ENCODE measurements at regions of chr9 and their contacts with region 1.

Region 1: GRCh38 chr9:75993434-75993833 is 103.0 kb downstream of the PCSK5 start:
- DNase-seq: no peak
- H3K4me3 Mint-ChIP-seq: no peak overlapping the region
- H3K27ac Mint-ChIP-seq: no peak overlapping the region
- H3K4me1 Mint-ChIP-seq: peaks cover 32% of the 10 kb centered on the region
- H3K27me3 Mint-ChIP-seq: no peaks in the 10 kb centered on the region

Region 2: GRCh38 chr9:75142202-75142601 is 851.2 kb before region 1 on chr9:
- CTCF ChIA-PET with region 1: no interaction called
- POLR2A ChIA-PET with region 1: no interaction called
- intact Hi-C with region 1: no loop called
- DNase-seq: no peak
- H3K4me3 Mint-ChIP-seq: no peak overlapping the region
- H3K27ac Mint-ChIP-seq: peak overlapping the region; percentile 67
- H3K4me1 Mint-ChIP-seq: peaks cover 61% of the 10 kb centered on the region
- H3K27me3 Mint-ChIP-seq: no peaks in the 10 kb centered on the region

Region 3: DNA sequence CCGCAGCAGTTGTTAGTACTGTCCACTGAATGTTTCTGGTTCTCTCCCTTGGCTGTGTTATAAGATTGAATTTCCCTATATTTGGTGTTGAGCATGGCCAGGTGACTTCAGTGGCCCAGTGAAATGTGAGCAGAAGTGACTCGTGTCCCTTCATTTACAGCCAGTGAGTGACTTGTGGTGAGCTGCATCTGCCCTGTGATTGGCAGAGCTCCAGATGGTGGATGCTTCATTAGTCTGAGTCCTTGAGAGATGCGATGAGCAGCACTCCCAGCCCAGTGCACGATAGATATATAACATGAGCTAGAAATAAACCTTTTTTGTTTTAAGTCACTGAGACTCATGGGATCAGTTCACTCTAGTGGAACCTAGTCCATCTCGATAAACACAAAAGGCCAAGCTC is 83.7 kb before region 1 on chr9:
- CTCF ChIA-PET with region 1: no interaction called
- POLR2A ChIA-PET with region 1: no interaction called
- intact Hi-C with region 1: loop called (anchors 5 kb)
- DNase-seq: peak; percentile 12
- H3K4me3 Mint-ChIP-seq: no peak overlapping the region
- H3K27ac Mint-ChIP-seq: no peak overlapping the region
- H3K4me1 Mint-ChIP-seq: peaks cover 16% of the 10 kb centered on the region
- H3K27me3 Mint-ChIP-seq: no peaks in the 10 kb centered on the region

Region 4: DNA sequence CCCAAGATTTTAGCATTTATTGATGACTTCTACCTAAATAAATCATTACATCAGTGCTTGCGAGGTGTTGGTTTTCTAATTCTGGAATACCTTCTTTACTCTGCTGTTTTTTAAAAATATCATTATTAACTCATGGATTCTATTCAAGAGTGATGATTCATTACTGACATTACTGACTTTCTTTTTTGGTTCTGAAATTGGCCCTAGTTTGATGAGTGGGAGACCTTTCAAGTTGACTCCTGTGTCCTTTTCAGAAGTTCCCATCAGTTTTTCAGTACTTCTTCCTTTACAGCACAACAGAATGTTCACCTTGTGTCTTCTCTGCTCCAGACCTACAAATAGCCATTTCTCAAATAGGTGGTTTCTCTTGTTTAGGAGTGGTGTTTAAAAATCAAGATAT is 11.1 kb after region 1 on chr9:
- CTCF ChIA-PET with region 1: no interaction called
- POLR2A ChIA-PET with region 1: no interaction called
- intact Hi-C with region 1: loop called (anchors 1 kb)
- DNase-seq: no peak
- H3K4me3 Mint-ChIP-seq: no peak overlapping the region
- H3K27ac Mint-ChIP-seq: no peak overlapping the region
- H3K4me1 Mint-ChIP-seq: peaks cover 27% of the 10 kb centered on the region
- H3K27me3 Mint-ChIP-seq: no peaks in the 10 kb centered on the region

Region 5: GRCh38 chr9:76018235-76018634 is 24.8 kb after region 1 on chr9:
- CTCF ChIA-PET with region 1: no interaction called
- POLR2A ChIA-PET with region 1: no interaction called
- intact Hi-C with region 1: loop called (anchors 2 kb)
- DNase-seq: no peak
- H3K4me3 Mint-ChIP-seq: no peak overlapping the region
- H3K27ac Mint-ChIP-seq: no peak overlapping the region
- H3K4me1 Mint-ChIP-seq: peaks cover 42% of the 10 kb centered on the region
- H3K27me3 Mint-ChIP-seq: no peaks in the 10 kb centered on the region

Region 6: GRCh38 chr9:76044266-76044819 is 50.9 kb after region 1 on chr9:
- CTCF ChIA-PET with region 1: no interaction called
- POLR2A ChIA-PET with region 1: no interaction called
- intact Hi-C with region 1: no loop called
- DNase-seq: no peak
- H3K4me3 Mint-ChIP-seq: no peak overlapping the region
- H3K27ac Mint-ChIP-seq: no peak overlapping the region
- H3K4me1 Mint-ChIP-seq: no peaks in the 10 kb centered on the region
- H3K27me3 Mint-ChIP-seq: no peaks in the 10 kb centered on the region

Region 7: GRCh38 chr9:76150013-76150412 is 156.6 kb after region 1 on chr9:
- CTCF ChIA-PET with region 1: no interaction called
- POLR2A ChIA-PET with region 1: no interaction called
- intact Hi-C with region 1: no loop called
- DNase-seq: no peak
- H3K4me3 Mint-ChIP-seq: no peak overlapping the region
- H3K27ac Mint-ChIP-seq: no peak overlapping the region
- H3K4me1 Mint-ChIP-seq: no peaks in the 10 kb centered on the region
- H3K27me3 Mint-ChIP-seq: no peaks in the 10 kb centered on the region